AG04449 (cell line): ENCODE measurements at regions of chr15 and their contacts with region 1.

Region 1: GRCh38 chr15:75903331-75904239 is at the start of gene FBXO22:
- DNase-seq: peak; percentile 31
- H3K4me3 ChIP-seq: peak within 1 kb of the TSS; percentile 99
- CTCF ChIP-seq: no peak

Region 2: DNA sequence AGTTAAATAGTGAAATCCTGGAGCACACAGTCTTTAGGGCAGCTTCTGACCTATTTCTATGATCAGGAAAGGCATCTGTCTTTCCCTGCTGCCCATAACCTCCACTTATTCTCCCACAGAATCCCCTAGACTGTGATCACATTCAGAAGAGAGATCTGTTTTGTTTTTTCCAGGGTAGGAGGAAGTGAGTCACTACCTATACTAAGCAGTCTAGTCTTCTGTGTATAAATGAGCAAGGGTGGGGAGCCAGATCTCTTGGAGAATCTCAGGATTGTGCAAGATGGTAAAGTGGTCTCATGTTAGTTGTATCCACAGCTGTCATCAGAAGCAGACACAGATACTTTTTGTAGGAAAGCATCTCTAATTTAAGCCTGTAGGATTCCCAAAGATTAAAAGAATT is 11.7 kb before region 1 on chr15:
- CTCF ChIA-PET with region 1: interaction called, 10 read pairs
- POLR2A ChIA-PET with region 1: interaction called, 3 read pairs
- DNase-seq: peak; percentile 83
- H3K4me3 ChIP-seq: no peak overlapping the region
- CTCF ChIP-seq: no peak

Region 3: DNA sequence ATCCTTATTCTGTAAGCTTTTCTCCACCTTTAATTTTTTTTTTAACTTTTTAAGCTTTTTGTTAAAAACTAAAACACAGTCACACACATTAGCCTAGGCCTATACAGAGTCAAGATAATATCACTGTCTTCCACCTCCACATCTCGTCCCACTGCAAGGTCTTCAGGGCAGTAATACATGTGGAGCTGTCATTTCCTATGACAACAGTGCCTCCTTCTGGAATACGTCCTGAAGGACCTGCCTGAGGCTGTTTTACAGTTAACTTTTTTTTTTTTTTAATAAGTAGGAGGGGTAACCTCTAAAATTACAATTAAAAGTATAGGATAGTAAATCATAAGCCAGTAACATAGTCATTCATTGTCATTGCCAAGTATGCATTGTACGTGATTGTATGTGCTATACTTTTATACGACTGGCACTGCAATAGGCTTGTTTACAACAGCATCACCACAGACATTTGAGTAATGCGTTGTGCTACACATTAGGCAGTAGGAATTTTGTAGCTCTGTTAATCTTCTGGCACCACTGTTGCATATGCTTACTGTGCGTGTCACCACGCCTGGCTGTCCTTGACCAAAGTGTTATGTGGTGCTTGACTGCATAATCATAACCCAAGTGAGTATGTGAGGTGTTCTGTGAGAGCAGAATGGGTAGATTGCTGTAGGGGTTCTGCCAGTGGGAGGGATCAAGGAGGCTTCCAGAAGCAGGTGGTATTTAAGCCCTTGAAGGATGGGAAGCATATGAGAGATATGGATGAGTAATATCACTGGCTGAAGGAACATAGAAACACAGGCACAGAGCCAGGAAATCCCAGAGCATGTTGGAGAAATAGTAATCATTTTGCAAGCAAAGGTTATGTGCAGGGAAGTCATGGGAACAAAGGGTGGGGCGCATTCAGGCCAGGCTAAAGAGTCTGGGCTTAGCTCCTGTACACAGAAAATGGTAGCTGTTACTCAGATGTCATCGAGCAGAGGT is 18.4 kb after region 1 on chr15:
- CTCF ChIA-PET with region 1: interaction called, 10 read pairs
- POLR2A ChIA-PET with region 1: no interaction called
- DNase-seq: peak; percentile 37
- H3K4me3 ChIP-seq: no peak overlapping the region
- CTCF ChIP-seq: peak; percentile 35